Stomach (tissue), 19 donors: ENCODE measurements at regions of chr19 and their contacts with region 1.

Region 1: GRCh38 chr19:44841231-44841630 is 4.9 kb upstream of the NECTIN2 start:
- DNase-seq: no peak
- H3K4me3 ChIP-seq: no peak overlapping the region
- H3K27ac ChIP-seq: no peak overlapping the region
- H3K4me1 ChIP-seq: peaks cover 8 to 19% (median 17%) of the 10 kb centered on the region in 4 donors
- H3K27me3 ChIP-seq: no peaks in the 10 kb centered on the region
- CTCF ChIP-seq: no peak
- EP300 ChIP-seq: no peak
- POLR2A ChIP-seq: no peak

Region 2: DNA sequence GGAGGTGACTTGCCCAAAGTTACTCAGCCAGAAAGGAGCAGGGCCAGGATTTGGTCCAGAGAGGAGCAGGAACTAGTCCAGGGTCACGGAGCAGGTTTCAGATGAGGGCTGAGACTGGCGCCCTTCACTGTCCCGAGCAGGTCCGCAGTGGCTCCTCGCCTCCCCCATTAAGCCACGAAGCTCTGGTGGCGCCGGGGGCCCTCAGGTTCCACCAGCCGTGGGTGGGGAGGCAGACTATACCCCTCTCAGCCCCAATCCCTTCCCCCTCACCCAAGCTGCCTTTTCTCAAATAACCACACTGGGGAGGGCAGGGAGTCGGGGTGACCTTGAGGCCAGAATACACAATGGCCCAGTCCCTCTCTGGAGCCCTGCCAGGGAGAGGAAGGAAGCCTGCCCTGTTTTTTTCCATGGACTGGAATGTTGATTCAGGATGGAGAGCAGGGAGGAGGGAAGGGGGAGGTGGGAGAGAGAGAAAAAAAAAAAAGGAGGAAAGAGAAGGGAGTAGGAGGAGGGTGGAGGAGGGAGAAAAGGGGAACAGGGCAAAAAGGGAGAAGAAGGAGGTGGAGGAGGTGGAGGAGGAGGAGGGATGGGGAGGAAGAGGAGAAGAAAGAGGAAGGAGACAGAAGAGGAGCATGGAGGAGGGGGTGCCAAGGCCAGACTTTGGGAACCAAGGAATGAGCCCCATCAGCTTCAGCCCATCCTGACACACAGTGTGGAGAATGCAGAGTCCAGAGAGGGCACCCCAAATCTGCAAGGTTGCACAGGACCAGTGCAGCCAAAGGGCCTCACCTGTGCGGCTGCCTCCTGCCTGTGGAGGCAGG is 122.6 kb before region 1 on chr19:
- intact Hi-C with region 1: loop called (anchors 10 kb)
- DNase-seq: peak; percentile 90 to 93
- H3K4me3 ChIP-seq: peak overlapping the region in 2 of 4 donors; percentile 14 to 22
- H3K27ac ChIP-seq: peak overlapping the region; percentile 82 to 86 (median 84)
- H3K4me1 ChIP-seq: peaks cover 22 to 48% (median 29%) of the 10 kb centered on the region in 4 donors
- H3K27me3 ChIP-seq: no peaks in the 10 kb centered on the region
- CTCF ChIP-seq: no peak
- EP300 ChIP-seq: no peak
- POLR2A ChIP-seq: no peak

Region 3: DNA sequence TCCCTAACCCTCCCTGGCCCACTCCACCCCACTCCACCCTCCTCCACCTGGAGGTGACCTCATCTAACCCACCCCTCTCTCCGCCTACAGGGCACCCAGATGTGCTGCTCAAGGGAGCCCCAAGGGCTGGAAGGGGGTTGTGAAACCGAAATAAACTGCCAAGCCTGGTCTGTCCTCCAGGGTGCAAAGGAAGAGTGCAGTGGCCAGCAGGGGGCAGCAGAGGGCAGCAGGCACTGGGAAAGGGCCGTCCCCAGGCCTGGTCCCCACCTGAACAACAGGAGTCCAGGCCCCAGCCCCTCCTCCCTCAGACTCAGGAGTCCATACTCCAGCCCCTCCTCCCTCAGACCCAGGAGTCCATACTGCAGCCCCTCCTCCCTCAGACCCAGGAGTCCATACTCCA is 40.8 kb before region 1 on chr19:
- intact Hi-C with region 1: loop called (anchors 5 kb)
- DNase-seq: peak; percentile 87 to 94
- H3K4me3 ChIP-seq: no peak overlapping the region
- H3K27ac ChIP-seq: no peak overlapping the region
- H3K4me1 ChIP-seq: peaks cover 0 to 25% (median 22%) of the 10 kb centered on the region in 4 donors
- H3K27me3 ChIP-seq: no peaks in the 10 kb centered on the region
- CTCF ChIP-seq: peak in 5 of 7 experiments; percentile 86 to 96 (median 94)
- EP300 ChIP-seq: no peak
- POLR2A ChIP-seq: no peak

Region 4: GRCh38 chr19:44930088-44930487 is 88.9 kb after region 1 on chr19:
- intact Hi-C with region 1: no loop called
- DNase-seq: no peak
- H3K4me3 ChIP-seq: no peak overlapping the region
- H3K27ac ChIP-seq: no peak overlapping the region
- H3K4me1 ChIP-seq: peaks cover 5 to 27% (median 15%) of the 10 kb centered on the region in 4 donors
- H3K27me3 ChIP-seq: peaks cover 0 to 4% (median 0%) of the 10 kb centered on the region in 3 donors
- CTCF ChIP-seq: no peak
- EP300 ChIP-seq: no peak
- POLR2A ChIP-seq: no peak